ENCODE measurements at regions of chr3 and their contacts with region 1.

Region 1: GRCh38 chr3:128153156-128154041 is at the start of gene EEFSEC:
- DNase-seq: peak; percentile 81 to 86 (median 83)
- H3K4me3 ChIP-seq: peak within 1 kb of the TSS; percentile 84 to 85
- H3K4me3 Mint-ChIP-seq: peak within 1 kb of the TSS; percentile 83 to 96 (median 90)
- H3K27ac ChIP-seq: peak within 1 kb of the TSS; percentile 65
- H3K27ac Mint-ChIP-seq: peak within 1 kb of the TSS; percentile 85 to 98 (median 94)
- H3K4me1 ChIP-seq: peaks cover 18% of the 10 kb centered on the region
- H3K4me1 Mint-ChIP-seq: peaks cover 15 to 41% (median 28%) of the 10 kb centered on the region in 4 donors
- H3K27me3 ChIP-seq: no peaks in the 10 kb centered on the region
- H3K27me3 Mint-ChIP-seq: peaks cover 0 to 1% of the 10 kb centered on the region in 2 donors
- total RNA-seq, gene EEFSEC: 14.0 to 16.4 TPM

Region 2: DNA sequence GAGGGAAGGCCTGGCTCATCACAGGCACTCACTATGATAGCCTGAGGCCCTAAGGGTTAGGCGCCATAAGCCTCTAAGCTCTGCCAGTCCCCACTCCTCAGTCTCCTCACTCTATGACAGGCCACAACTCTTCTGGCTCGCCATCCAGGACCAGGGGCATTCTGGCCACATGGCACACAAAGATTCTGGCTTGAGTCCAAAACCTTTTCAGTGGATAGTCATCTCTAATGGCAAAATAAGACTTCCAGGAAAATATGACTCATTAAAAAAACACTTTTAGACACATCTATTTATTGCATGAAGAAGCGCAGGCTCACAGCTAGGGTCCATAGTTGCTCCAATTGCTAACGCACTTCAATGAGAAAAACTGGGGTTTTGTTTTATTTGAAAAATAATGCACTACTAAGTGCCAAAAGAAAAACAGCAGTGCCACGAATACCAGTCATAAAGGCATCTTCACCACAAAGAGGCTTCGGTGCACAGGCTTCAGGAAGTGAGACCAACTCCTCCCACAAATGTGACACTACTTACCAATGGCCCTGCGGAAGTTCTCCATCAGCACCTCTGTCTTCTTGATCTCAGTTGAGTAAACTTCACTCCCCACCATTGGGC is 40.9 kb before region 1 on chr3:
- CTCF ChIA-PET with region 1: no interaction called
- POLR2A ChIA-PET with region 1: interaction called, 9 read pairs
- intact Hi-C with region 1: loop called (anchors 5 kb)
- DNase-seq: peak; percentile 63 to 76 (median 69)
- H3K4me3 ChIP-seq: no peak overlapping the region
- H3K4me3 Mint-ChIP-seq: peak overlapping the region in 7 of 8 donors; percentile 32 to 88 (median 72)
- H3K27ac ChIP-seq: peak overlapping the region; percentile 55
- H3K27ac Mint-ChIP-seq: peak overlapping the region; percentile 95 to 99 (median 97)
- H3K4me1 ChIP-seq: peaks cover 40% of the 10 kb centered on the region
- H3K4me1 Mint-ChIP-seq: peaks cover 38 to 51% (median 43%) of the 10 kb centered on the region in 4 donors
- H3K27me3 ChIP-seq: no peaks in the 10 kb centered on the region
- H3K27me3 Mint-ChIP-seq: no peaks in the 10 kb centered on the region

Measured in CD4-positive, alpha-beta memory T cell (primary cell).